Activated CD4-positive, alpha-beta memory T cell treated with anti-CD3 and anti-CD28 coated beads for 36 hours (primary cell): ENCODE measurements at regions of chr19 and their contacts with region 1.

Region 1: DNA sequence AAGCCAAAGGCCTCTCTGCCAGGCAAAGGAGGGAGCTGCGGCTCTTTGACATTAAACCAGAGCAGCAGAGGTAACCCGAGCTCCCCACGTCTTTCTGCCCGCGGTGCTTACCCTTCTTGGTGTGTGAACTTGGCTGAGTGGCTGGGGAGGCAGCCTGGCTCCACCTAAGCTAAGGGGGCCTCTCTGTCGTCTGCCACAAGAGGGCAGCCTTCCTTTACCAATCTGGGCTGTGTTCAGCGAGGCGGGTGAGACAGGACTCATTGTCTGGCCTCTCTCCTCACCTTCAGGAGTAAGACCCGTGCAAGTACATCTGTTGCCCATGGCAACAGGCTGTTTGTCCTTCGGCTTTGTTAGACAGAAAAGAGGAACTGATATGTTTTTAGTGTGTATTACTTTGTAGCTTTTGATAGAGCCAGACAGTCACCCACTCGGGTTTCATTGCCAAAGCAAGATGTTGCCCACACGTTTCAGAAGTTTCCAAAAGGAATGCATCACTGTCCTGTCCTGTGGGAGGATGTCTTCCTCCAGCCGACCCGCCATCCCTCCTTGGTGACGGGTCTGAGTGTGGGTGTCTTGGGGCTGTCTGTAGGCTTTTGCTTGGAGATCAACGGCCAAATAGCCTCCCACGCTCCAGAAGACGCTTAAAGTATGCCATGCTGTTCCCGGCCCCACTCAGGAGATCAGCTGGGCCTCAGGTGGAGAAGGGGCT is 4.6 kb downstream of the POP4 start:
- DNase-seq: peak; percentile 89
- H3K4me3 Mint-ChIP-seq: no peak overlapping the region
- H3K27ac Mint-ChIP-seq: peak overlapping the region; percentile 64
- H3K4me1 Mint-ChIP-seq: peaks cover 17% of the 10 kb centered on the region
- H3K27me3 Mint-ChIP-seq: no peaks in the 10 kb centered on the region

Region 2: GRCh38 chr19:29212648-29213573 is 397.8 kb before region 1 on chr19 and contains the start of gene UQCRFS1:
- CTCF ChIA-PET with region 1: no interaction called
- POLR2A ChIA-PET with region 1: no interaction called
- intact Hi-C with region 1: loop called (anchors 1 kb)
- DNase-seq: peak; percentile 98
- H3K4me3 Mint-ChIP-seq: peak within 1 kb of the TSS; percentile 95
- H3K27ac Mint-ChIP-seq: peak within 1 kb of the TSS; percentile 94
- H3K4me1 Mint-ChIP-seq: peaks cover 42% of the 10 kb centered on the region
- H3K27me3 Mint-ChIP-seq: peaks cover 2% of the 10 kb centered on the region
- total RNA-seq, gene UQCRFS1: 42.0 to 43.9 TPM

Region 3: DNA sequence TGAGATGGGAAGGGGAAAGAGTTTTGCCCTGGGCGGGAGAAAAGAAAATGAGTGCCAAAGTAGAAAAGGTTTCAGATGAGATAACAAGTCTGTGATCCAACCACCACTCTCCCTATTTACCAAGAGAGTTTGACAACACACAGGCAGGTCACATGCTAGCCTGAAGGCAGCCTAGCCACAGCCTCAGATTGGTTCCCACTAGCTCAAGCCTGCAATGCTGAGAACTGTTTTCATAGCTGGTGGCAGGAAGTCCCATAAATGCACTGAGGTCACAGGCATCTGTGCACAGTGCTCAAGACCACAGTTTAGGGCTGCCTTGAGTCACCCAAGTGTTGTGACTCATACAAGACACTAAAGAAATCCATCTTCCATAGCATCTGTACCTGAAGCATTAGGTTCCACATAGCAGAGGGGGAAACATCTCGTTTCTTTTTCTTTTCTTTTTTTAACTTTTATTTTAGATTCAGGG is 23.2 kb before region 1 on chr19:
- CTCF ChIA-PET with region 1: interaction called, 10 read pairs
- POLR2A ChIA-PET with region 1: interaction called, 10 read pairs
- intact Hi-C with region 1: no loop called
- DNase-seq: peak; percentile 86
- H3K4me3 Mint-ChIP-seq: no peak overlapping the region
- H3K27ac Mint-ChIP-seq: peak overlapping the region; percentile 64
- H3K4me1 Mint-ChIP-seq: peaks cover 22% of the 10 kb centered on the region
- H3K27me3 Mint-ChIP-seq: peaks cover 23% of the 10 kb centered on the region

Region 4: GRCh38 chr19:29665215-29665825 is 54.6 kb after region 1 on chr19 and contains the start of gene PLEKHF1:
- CTCF ChIA-PET with region 1: interaction called, 66 read pairs
- POLR2A ChIA-PET with region 1: interaction called, 46 read pairs
- intact Hi-C with region 1: loop called (anchors 1 kb)
- DNase-seq: peak; percentile 91
- H3K4me3 Mint-ChIP-seq: peak within 1 kb of the TSS; percentile 82
- H3K27ac Mint-ChIP-seq: peak within 1 kb of the TSS; percentile 99
- H3K4me1 Mint-ChIP-seq: peaks cover 64% of the 10 kb centered on the region
- H3K27me3 Mint-ChIP-seq: no peaks in the 10 kb centered on the region
- total RNA-seq, gene PLEKHF1: 23.6 to 24.3 TPM

Region 5: DNA sequence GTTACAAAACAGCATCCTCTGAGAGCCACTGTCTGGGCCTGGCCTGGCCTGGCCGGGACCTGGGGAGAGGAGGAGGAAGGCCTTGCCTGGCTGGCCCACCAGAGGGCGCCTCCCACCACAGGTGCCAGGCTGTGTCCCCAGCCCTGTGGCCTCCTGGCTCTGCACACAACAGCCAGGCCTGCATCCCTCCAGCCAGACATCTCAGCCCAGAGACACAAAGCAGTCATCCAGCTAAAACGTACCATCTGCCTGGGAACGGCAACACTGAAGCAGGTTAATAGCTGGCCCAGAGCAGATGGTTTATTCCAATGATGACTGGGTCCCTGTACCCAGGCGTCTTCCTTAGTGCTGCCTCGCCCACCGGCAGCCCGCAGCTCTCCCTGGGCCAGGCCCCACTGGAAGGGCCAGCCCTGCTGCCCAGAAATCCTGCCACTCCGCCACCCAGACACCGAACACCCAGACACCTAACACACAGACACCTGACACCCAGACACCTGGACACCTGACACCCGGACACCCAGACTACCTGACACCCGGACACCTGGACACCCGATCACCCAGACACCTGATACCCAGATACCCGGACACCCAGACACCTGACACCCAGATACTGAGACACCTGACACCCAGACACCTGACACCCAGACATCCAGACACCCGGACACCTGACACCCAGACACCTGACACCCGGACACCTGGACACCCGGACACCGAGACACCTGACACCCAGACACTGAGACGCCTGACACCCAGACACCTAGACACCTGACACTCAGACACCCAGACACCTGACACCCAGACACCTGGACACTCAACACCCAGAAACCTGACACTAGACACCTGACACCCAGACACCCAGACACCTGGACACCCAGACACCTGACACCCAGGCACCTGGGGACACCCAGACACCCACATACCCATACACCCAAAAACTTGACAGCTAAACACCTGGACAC is 84.2 kb after region 1 on chr19:
- CTCF ChIA-PET with region 1: interaction called, 130 read pairs
- POLR2A ChIA-PET with region 1: interaction called, 3 read pairs
- intact Hi-C with region 1: loop called (anchors 1 kb)
- DNase-seq: peak; percentile 87
- H3K4me3 Mint-ChIP-seq: no peak overlapping the region
- H3K27ac Mint-ChIP-seq: no peak overlapping the region
- H3K4me1 Mint-ChIP-seq: peaks cover 11% of the 10 kb centered on the region
- H3K27me3 Mint-ChIP-seq: no peaks in the 10 kb centered on the region

Region 6: GRCh38 chr19:29941828-29942403 is 331.2 kb after region 1 on chr19 and contains the start of gene URI1:
- CTCF ChIA-PET with region 1: interaction called, 3 read pairs
- POLR2A ChIA-PET with region 1: interaction called, 4 read pairs
- intact Hi-C with region 1: loop called (anchors 5 kb)
- DNase-seq: peak; percentile 95
- H3K4me3 Mint-ChIP-seq: peak within 1 kb of the TSS; percentile 98
- H3K27ac Mint-ChIP-seq: peak within 1 kb of the TSS; percentile 94
- H3K4me1 Mint-ChIP-seq: peaks cover 36% of the 10 kb centered on the region
- H3K27me3 Mint-ChIP-seq: no peaks in the 10 kb centered on the region
- total RNA-seq, gene URI1: 66.9 to 68.5 TPM